Activated T-helper 1 cell treated with anti-CD3 and anti-CD28 coated beads, Interleukin-12 subunit alpha, Interleukin-12 subunit beta, Interleukin-2, Interleukin-4 antibody, amounts not matched to agents 30 ng/mL and 10 ng/mL and 1 ng/mL, durations not matched to agents 14 hours and 24 hours and 36 hours (primary cell): ENCODE measurements at regions of chr19 and their contacts with region 1.

Region 1: DNA sequence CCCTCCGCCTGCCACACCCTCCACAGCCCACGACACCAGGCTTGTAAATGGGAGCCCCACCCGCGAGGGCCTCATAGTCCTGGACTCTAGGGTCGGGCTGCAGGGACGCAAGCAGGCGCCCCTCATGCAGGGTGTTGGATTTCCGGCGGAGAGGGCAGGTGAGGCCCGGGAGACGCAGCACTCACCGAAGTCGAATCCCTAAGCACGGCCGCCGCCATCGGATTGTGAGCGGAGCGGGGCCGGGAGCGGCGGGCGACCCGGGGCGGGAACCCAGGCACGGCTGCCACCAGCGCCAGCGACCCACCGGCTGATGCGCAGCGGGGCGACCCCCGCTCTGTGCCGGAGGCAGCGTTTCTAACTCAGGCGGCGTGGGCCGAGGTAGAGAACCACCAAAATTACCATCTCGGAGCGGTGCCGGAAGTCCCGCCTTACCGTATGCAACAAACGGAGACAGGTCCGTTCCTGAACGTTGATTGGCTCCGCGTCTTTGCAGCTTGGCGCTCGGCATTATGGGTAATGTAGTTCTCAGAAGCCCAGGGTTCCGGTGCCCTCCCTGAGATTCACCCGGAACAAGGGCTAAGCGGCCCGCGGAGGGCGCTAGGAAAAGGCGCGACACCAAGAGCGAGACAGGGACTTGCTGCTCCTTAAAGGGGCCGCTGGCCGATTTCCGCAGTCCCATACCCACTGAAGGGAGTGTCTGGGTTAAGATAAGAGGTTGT is at the start of gene ZNF416:
- DNase-seq: peak; percentile 94
- H3K4me3 Mint-ChIP-seq: peak within 1 kb of the TSS; percentile 80
- H3K27ac Mint-ChIP-seq: peak within 1 kb of the TSS; percentile 74
- H3K4me1 Mint-ChIP-seq: peaks cover 18% of the 10 kb centered on the region
- H3K27me3 Mint-ChIP-seq: no peaks in the 10 kb centered on the region
- total RNA-seq, gene ZNF416: 3.2 and 3.7 TPM in 2 replicates

Region 2: GRCh38 chr19:57240311-57241090 is 338.1 kb before region 1 on chr19 and contains the start of gene ZNF805:
- intact Hi-C with region 1: loop called (anchors 2 kb)
- DNase-seq: peak; percentile 93
- H3K4me3 Mint-ChIP-seq: peak within 1 kb of the TSS; percentile 92
- H3K27ac Mint-ChIP-seq: peak within 1 kb of the TSS; percentile 97
- H3K4me1 Mint-ChIP-seq: peaks cover 14% of the 10 kb centered on the region
- H3K27me3 Mint-ChIP-seq: no peaks in the 10 kb centered on the region
- total RNA-seq, gene ZNF805: 6.9 and 8.4 TPM in 2 replicates

Region 3: GRCh38 chr19:57314146-57314545 is 264.5 kb before region 1 on chr19:
- intact Hi-C with region 1: no loop called
- DNase-seq: no peak
- H3K4me3 Mint-ChIP-seq: no peak overlapping the region
- H3K27ac Mint-ChIP-seq: no peak overlapping the region
- H3K4me1 Mint-ChIP-seq: no peaks in the 10 kb centered on the region
- H3K27me3 Mint-ChIP-seq: peaks cover 20% of the 10 kb centered on the region

Region 4: DNA sequence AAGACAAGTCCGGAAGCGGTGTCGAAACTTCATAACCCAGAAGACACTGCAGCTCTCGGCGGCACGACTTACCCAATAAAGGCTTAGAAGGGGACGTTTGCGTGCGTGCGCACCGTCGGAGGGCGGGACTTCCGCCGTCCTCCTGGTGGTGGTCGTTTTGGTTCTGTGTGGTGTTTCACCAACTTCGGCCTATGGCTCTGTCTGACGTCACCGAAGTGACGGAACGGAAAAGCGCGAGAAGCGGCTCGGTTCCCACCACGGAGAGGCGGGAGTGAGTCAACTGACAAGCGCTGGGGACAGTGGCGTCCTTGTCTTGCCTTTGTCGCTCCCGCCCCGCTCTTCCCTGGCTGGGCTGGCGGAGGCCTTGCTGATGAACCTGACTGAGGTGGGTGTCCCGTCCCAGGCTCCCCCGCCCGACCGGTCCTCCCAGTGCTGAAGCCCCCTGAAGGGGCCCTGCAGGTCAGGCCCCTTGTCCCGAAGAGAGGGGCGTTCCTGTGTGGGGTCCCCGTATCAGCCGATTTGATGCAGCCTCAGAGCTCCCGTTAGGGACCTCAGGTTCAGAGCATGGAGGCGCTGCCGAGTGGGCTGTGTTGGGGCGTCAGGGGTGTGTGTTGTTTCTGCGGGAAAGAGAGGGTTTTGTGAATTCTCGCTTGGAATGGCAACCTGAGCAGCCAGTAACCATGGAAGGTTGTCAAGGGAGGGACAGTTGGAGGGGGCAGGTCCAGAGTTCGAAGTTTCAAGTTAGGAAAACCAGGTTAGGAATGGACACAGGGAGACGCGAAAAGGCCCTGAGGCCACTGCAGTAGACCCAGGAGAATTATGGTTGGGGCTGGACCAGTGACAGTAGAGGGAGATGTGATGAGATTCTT is 188.7 kb before region 1 on chr19 and contains the start of gene ZNF548:
- intact Hi-C with region 1: loop called (anchors 1 kb)
- DNase-seq: peak; percentile 92
- H3K4me3 Mint-ChIP-seq: peak within 1 kb of the TSS; percentile 94
- H3K27ac Mint-ChIP-seq: peak within 1 kb of the TSS; percentile 94
- H3K4me1 Mint-ChIP-seq: peaks cover 30% of the 10 kb centered on the region
- H3K27me3 Mint-ChIP-seq: no peaks in the 10 kb centered on the region
- total RNA-seq, gene ZNF548: 11.3 and 12.1 TPM in 2 replicates

Region 5: DNA sequence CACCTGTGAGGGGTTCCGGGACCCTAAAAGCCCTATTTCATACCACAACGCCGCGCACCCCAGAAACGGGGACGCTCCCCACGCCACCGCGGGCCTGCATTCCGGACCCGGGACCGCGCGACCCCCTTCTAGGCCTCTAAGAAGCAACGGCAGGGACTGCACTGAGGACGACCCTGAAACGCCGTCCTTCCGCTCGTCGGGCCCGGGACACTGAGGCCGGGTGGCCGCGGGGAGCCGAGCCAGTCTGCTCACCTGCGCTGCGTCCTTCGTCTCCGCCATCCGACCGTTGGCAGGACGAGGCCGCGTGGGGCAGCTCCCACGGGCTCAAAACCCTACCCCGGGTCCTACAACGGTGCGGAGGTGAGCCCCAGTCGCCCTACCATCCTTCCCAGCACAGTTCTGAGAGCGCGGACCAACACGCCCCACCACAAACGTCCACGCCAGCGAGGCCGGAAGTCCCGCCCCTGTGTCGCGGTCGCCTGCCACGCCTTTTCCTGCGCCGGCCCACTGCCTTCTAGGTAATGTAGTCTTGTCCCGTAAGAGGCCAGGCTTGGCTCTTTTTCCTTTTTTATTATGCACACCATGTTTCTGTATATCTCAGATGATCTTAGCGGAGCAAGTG is 19.1 kb before region 1 on chr19 and contains the start of gene ZNF550:
- intact Hi-C with region 1: loop called (anchors 1 kb)
- DNase-seq: peak; percentile 84
- H3K4me3 Mint-ChIP-seq: peak within 1 kb of the TSS; percentile 98
- H3K27ac Mint-ChIP-seq: peak within 1 kb of the TSS; percentile 88
- H3K4me1 Mint-ChIP-seq: peaks cover 28% of the 10 kb centered on the region
- H3K27me3 Mint-ChIP-seq: no peaks in the 10 kb centered on the region
- total RNA-seq, gene ZNF550: 7.2 and 7.5 TPM in 2 replicates

Region 6: DNA sequence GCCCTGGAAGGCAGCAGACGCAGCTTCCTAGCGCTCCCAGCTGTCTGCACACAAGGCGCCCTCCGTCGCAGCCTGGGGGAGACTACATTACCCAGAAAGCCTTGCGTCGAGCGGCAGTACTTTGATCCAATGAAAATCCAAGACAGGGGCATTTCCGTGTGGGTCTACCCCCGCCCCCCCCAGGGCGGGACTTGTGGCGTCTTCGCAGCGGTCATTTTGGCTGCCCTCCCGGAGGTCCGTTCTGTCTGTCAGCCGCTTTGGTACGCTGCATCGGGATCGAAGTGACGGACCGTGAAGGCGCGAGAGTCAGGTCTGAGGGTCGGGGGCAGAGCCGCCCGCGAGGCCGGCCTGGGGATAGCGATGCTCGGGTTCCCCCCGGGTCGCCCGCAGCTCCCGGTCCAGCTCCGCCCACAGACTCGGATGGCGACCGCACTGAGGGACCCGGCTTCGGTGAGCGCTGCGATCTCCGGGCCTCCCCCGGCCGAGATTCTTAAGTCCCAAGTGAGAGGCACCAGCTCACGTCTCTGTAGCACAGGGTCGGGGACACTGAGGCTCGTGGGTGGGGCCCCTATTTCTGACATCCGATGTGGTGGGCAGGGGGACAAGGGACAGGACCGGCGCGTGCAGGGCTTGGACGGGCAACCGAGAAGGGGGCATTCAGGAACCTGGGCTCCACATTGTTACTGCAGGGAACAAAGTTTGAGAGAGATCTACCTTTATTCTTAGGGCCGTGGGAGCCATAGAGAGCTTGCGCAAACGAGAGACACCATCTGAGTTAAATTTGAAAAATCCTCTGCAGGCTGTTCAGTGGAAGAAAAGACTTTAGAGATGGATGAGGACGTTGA is 54.6 kb after region 1 on chr19 and contains the start of gene ZNF211:
- intact Hi-C with region 1: loop called (anchors 1 kb)
- DNase-seq: peak; percentile 80
- H3K4me3 Mint-ChIP-seq: peak within 1 kb of the TSS; percentile 89
- H3K27ac Mint-ChIP-seq: peak within 1 kb of the TSS; percentile 78
- H3K4me1 Mint-ChIP-seq: peaks cover 19% of the 10 kb centered on the region
- H3K27me3 Mint-ChIP-seq: no peaks in the 10 kb centered on the region
- total RNA-seq, gene ZNF211: 8.3 and 8.4 TPM in 2 replicates

Region 7: DNA sequence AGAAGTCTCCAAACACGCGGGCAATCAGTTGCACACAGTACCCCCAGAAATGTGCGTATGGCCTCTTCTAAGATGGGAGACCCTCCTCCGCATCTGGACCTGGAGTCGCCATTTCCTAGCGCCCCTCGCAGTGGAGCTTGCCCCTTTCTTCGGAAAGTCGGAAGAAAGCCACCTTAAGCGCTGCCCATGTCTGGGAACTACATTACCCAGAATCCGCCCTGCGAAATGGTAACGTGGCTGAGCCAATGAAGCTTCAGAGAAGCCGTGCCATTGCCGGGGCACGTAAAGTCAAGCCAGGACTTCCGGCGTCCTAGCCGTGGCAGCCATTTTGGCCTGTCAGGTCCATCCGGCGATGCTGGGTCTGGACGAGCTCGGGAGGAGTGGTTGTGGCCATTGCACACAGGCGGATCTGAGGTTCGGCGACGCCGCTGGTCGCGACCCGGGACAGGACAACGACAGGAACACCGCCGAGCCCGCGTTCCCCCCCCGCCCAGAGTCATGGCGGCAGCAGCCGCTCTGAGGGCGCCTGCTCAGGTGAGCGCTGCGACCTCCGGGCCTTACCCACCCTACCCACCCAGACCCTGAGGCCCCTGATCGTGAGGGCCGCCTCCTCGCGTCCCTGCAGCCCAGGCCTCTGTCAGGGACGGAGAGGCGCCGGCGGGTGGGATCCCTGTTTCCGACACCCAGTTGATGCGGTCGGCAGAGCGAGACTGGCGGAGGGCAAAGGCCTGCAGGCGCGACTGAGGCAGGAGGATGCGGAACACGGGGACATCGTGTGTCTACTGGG is 190.9 kb after region 1 on chr19 and contains the start of gene ZNF586:
- intact Hi-C with region 1: loop called (anchors 1 kb)
- DNase-seq: peak; percentile 85
- H3K4me3 Mint-ChIP-seq: peak within 1 kb of the TSS; percentile 94
- H3K27ac Mint-ChIP-seq: peak within 1 kb of the TSS; percentile 89
- H3K4me1 Mint-ChIP-seq: peaks cover 24% of the 10 kb centered on the region
- H3K27me3 Mint-ChIP-seq: no peaks in the 10 kb centered on the region
- total RNA-seq, gene ZNF586: 13.6 and 13.8 TPM in 2 replicates

Region 8: DNA sequence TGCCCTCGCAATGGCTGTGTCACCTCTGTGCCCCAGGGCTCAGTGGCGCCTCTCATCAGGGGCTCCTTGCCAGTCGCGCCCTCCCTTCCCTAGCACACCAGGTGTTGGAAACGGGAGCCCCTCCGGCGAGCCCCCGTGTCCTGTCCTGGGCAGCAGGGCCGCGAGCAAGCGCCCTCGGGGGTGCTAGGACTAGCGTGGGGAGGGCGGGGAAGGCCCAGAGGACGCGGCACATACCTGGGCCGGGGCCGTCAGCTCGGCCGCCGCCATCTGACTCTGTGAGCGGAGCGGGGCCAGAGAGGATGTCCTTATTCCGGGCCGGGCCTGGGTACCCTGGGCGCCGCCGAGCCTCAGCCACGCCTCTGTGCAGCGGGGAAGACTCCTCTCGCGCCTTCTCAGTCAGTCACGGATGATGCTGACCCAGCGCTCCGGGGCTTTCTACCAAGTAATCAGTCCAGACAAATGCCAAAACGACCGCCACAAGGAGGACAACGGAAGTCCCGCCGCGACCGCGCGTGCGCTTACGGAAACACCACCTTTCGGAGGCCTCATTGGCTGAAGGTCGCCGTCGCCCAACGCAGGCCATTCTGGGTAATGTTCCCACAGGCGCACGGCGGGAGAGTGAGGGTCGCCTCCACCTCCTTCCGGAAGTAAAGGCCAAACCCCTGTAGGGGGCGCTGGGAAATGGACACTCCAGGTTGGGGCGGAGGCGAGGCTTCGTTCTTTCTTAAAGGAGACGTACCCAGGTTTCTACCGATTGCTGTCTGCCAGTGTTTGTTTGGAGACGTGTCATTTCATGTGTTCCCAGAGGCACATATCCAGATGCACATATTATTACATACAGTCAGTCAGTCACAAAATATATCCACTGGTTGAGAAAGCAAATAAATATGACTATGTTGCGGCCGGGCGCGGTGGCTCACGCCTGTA is 368.8 kb after region 1 on chr19 and contains the start of gene ZNF256:
- intact Hi-C with region 1: loop called (anchors 1 kb)
- DNase-seq: peak; percentile 78
- H3K4me3 Mint-ChIP-seq: peak within 1 kb of the TSS; percentile 94
- H3K27ac Mint-ChIP-seq: peak within 1 kb of the TSS; percentile 89
- H3K4me1 Mint-ChIP-seq: peaks cover 12% of the 10 kb centered on the region
- H3K27me3 Mint-ChIP-seq: no peaks in the 10 kb centered on the region
- total RNA-seq, gene ZNF256: 2.5 and 3.4 TPM in 2 replicates